H1 (cell line): ENCODE measurements at regions of chr1 and their contacts with region 1.

Region 1: GRCh38 chr1:23664837-23665795 is 26.5 kb upstream of the RPL11 start:
- DNase-seq: no peak
- H3K4me3 ChIP-seq: no peak overlapping the region
- H3K27ac ChIP-seq: no peak overlapping the region
- H3K4me1 ChIP-seq: no peaks in the 10 kb centered on the region
- H3K27me3 ChIP-seq: no peaks in the 10 kb centered on the region
- CTCF ChIP-seq: peak; percentile 1 to 60 (median 53)
- EP300 ChIP-seq: no peak
- POLR2A ChIP-seq: no peak
- RAD21 ChIP-seq: peak; percentile 64 to 68

Region 2: DNA sequence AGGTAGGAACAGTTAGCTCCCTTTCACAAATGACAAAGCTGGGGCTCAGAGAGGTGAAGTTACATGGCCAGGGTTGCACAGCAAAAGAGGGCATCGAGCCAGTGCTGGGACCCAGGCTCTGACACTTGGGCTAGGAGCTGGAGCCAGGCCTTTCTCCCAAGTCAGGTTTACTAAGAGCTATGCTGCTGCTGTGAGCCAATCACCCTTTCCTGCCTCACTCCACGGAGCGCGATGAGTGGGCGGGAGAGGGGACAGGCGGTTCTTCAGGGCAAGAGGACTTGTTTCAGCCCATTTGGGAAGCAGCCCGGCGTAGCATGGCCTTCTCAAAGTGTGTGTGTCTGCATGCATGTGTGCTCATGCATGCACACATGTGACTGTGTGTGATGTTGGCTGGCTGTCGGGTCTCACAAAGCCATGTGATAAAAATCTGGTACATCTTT is 116.4 kb before region 1 on chr1:
- CTCF ChIA-PET with region 1: interaction called, 146 read pairs
- POLR2A ChIA-PET with region 1: no interaction called
- DNase-seq: no peak
- H3K4me3 ChIP-seq: no peak overlapping the region
- H3K27ac ChIP-seq: no peak overlapping the region
- H3K4me1 ChIP-seq: peaks cover 7 to 15% (median 8%) of the 10 kb centered on the region in 4 experiments; a peak in 6 of 7 replicates
- H3K27me3 ChIP-seq: peaks cover 0 to 2% (median 1%) of the 10 kb centered on the region in 4 experiments; a peak in 2 of 7 replicates
- CTCF ChIP-seq: no peak
- EP300 ChIP-seq: no peak
- POLR2A ChIP-seq: no peak
- RAD21 ChIP-seq: no peak

Region 3: GRCh38 chr1:23643736-23644554 is 21.2 kb before region 1 on chr1:
- CTCF ChIA-PET with region 1: interaction called, 222 read pairs
- POLR2A ChIA-PET with region 1: no interaction called
- DNase-seq: no peak
- H3K4me3 ChIP-seq: no peak overlapping the region
- H3K27ac ChIP-seq: no peak overlapping the region
- H3K4me1 ChIP-seq: peaks cover 0 to 4% (median 2%) of the 10 kb centered on the region in 4 experiments; a peak in 3 of 7 replicates
- H3K27me3 ChIP-seq: peaks cover 0 to 2% (median 0%) of the 10 kb centered on the region in 4 experiments; a peak in 2 of 7 replicates
- CTCF ChIP-seq: no peak
- EP300 ChIP-seq: no peak
- POLR2A ChIP-seq: no peak
- RAD21 ChIP-seq: no peak

Region 4: DNA sequence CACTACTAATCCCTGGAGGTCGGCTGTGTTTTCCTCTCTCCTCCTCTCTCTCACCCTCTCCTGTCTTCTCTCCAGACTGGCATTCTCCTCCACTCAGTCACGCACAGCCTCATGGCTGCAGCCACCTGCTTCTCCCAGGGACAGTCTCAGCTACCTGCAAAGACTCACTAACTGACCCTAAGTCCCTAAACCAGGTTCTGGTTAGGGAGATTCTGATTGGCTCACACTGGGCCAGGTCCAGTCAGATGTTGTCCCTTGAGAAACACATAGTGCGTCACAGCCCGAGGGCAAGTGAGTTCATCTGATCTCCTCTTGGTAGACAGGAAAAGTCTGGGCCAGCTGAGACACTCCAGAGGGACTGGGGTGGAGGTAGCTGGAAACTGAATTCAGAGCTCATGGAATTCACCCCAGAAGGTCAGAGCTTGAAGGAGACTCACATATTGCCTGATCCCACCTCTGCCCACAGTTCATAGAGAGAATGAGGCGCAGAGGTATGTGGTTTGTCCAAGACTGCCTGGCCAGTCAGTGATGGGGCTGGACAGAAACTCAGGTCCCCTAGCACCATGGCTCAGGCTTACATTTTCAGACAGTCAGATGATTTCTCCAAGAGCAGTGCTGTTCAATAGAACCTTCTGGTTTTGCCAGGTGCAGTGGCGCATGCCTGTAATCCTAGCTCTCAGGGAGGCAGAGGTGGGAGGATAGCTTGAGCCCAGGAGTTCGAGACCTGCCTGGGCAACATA is 13.9 kb before region 1 on chr1:
- CTCF ChIA-PET with region 1: interaction called, 13 read pairs
- POLR2A ChIA-PET with region 1: interaction called, 4 read pairs
- DNase-seq: no peak
- H3K4me3 ChIP-seq: no peak overlapping the region
- H3K27ac ChIP-seq: no peak overlapping the region
- H3K4me1 ChIP-seq: no peaks in the 10 kb centered on the region
- H3K27me3 ChIP-seq: no peaks in the 10 kb centered on the region
- CTCF ChIP-seq: no peak
- EP300 ChIP-seq: no peak
- POLR2A ChIP-seq: no peak
- RAD21 ChIP-seq: no peak

Region 5: DNA sequence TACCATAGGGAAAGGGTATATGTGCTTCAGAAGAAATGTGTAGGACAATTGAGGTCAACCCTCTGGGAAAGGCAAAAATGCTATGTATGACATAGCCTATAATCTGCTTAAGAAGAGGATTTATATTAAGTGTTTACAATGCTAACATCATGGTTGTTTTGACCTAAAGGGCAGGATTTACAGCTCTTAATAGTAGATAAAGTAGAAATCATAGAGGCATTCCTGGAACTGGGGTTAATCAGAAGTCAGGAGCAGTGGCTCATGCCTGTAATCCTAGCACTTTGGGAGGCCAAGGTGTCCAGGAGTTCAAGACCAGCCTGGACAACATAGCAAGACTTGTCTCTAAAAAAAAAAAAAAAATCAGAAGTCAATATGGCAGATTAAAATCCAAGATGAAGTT is 17.8 kb after region 1 on chr1:
- CTCF ChIA-PET with region 1: interaction called, 13 read pairs
- POLR2A ChIA-PET with region 1: interaction called, 3 read pairs
- DNase-seq: no peak
- H3K4me3 ChIP-seq: no peak overlapping the region
- H3K27ac ChIP-seq: no peak overlapping the region
- H3K4me1 ChIP-seq: no peaks in the 10 kb centered on the region
- H3K27me3 ChIP-seq: no peaks in the 10 kb centered on the region; a peak in 1 of 7 replicates
- CTCF ChIP-seq: no peak
- EP300 ChIP-seq: no peak
- POLR2A ChIP-seq: no peak
- RAD21 ChIP-seq: no peak